Psoas muscle (tissue), 8 donors: ENCODE measurements at regions of chr4 and their contacts with region 1.

Region 1: GRCh38 chr4:8594097-8595038 is 1.8 kb downstream of the CPZ start:
- DNase-seq: no peak
- ATAC-seq: peak; percentile 67 to 81 (median 72)
- H3K4me3 ChIP-seq: no peak overlapping the region
- H3K27ac ChIP-seq: no peak overlapping the region
- H3K4me1 ChIP-seq: no peaks in the 10 kb centered on the region
- H3K27me3 ChIP-seq: peaks cover 0 to 53% (median 20%) of the 10 kb centered on the region in 3 donors
- CTCF ChIP-seq: peak; percentile 55

Region 2: GRCh38 chr4:8241895-8242696 is 352.3 kb before region 1 on chr4:
- intact Hi-C with region 1: loop called (anchors 2 to 5 kb)
- DNase-seq: peak; percentile 89 to 94
- ATAC-seq: peak; percentile 90 to 94 (median 92)
- H3K4me3 ChIP-seq: no peak overlapping the region
- H3K27ac ChIP-seq: no peak overlapping the region
- H3K4me1 ChIP-seq: peaks cover 8% of the 10 kb centered on the region
- H3K27me3 ChIP-seq: no peaks in the 10 kb centered on the region
- CTCF ChIP-seq: peak; percentile 99

Region 3: GRCh38 chr4:8320386-8320750 is 274.0 kb before region 1 on chr4:
- intact Hi-C with region 1: no loop called
- DNase-seq: peak; percentile 14 to 39
- ATAC-seq: peak in 3 of 4 donors; percentile 19 to 45 (median 26)
- H3K4me3 ChIP-seq: no peak overlapping the region
- H3K27ac ChIP-seq: peak overlapping the region; percentile 76
- H3K4me1 ChIP-seq: peaks cover 22% of the 10 kb centered on the region
- H3K27me3 ChIP-seq: no peaks in the 10 kb centered on the region
- CTCF ChIP-seq: no peak

Region 4: DNA sequence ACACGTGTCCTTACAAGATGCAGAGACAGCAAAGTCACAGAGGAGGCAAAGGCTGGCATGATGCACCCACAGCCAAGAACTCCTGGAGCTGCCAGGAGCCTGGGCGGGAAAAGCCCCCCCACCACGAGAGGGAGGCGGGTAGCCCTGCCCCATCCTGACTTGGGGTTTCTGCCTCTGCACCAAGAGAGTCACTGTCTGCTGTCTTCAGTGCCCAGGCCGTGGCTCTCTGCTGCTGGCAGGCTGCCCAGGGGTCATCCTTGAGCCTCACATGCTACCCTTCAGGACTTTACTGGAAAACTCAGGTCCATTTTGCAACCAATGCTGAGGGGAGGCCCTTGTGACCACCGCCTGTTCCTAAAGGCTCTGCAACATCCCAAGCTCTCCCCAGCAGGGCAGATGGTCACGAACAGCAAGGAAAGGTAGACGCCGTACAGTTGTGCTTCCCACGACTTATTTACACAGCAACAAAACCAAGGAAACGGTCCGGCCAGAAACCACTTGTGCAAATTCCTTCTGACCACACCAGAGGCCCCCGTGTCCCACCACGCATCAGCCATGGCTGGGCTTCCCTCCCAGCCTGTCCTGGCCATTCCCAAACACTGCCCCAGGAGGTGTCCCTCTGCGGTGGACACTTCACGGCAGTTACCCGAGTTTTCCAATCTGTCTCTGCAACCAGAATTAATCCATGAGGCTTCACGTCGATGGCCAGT is 210.8 kb before region 1 on chr4:
- intact Hi-C with region 1: no loop called
- DNase-seq: peak; percentile 17 to 60
- ATAC-seq: no peak
- H3K4me3 ChIP-seq: no peak overlapping the region
- H3K27ac ChIP-seq: no peak overlapping the region
- H3K4me1 ChIP-seq: peaks cover 19% of the 10 kb centered on the region
- H3K27me3 ChIP-seq: no peaks in the 10 kb centered on the region
- CTCF ChIP-seq: no peak